A549 (cell line): ENCODE measurements at regions of chr5 and their contacts with region 1.

Region 1: DNA sequence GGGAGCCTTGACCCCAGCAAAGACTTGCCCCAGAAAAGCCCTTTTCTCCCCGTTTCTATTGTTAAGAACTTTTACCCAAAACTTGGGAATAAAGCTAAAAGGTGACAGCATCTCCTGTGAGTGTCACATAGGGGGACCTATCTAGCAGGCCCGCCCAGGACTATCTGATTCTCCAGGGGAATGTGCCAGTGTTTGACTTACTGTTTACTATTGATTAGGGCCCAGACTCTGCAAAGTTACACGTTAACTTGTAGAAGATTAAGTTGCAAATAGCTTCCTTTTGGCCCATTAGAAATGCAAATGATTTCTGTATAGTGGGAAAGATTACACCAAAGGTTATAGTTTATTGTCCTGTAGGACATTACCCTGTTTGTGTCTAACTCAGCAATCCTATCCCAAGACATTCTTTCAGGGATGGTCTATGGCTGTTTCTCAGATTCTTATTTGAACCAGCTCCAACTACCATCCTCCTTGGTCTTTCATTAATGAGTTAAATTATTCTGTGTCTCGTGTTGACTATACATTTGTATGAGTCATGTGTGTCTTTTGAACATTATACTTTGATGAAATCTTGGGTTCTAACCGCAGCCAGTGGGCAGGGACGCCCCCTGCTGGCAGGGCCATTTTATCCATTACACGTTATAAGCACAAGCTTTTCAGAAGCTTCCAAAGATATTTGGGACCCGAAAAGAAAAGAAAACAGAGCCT is 60.7 kb downstream of the HRH2 start:
- DNase-seq: peak in 1 of 2 experiments; percentile 42
- ATAC-seq: peak in 1 of 2 experiments; percentile 55; a peak in 1 of 6 replicates
- H3K4me3 ChIP-seq: no peak overlapping the region
- H3K27ac ChIP-seq: no peak overlapping the region
- H3K4me1 ChIP-seq: no peaks in the 10 kb centered on the region
- CTCF ChIP-seq: peak; percentile 67
- EP300 ChIP-seq: no peak
- POLR2A ChIP-seq: no peak
- RAD21 ChIP-seq: peak; percentile 59 to 66; a peak in 4 of 5 replicates

Region 2: DNA sequence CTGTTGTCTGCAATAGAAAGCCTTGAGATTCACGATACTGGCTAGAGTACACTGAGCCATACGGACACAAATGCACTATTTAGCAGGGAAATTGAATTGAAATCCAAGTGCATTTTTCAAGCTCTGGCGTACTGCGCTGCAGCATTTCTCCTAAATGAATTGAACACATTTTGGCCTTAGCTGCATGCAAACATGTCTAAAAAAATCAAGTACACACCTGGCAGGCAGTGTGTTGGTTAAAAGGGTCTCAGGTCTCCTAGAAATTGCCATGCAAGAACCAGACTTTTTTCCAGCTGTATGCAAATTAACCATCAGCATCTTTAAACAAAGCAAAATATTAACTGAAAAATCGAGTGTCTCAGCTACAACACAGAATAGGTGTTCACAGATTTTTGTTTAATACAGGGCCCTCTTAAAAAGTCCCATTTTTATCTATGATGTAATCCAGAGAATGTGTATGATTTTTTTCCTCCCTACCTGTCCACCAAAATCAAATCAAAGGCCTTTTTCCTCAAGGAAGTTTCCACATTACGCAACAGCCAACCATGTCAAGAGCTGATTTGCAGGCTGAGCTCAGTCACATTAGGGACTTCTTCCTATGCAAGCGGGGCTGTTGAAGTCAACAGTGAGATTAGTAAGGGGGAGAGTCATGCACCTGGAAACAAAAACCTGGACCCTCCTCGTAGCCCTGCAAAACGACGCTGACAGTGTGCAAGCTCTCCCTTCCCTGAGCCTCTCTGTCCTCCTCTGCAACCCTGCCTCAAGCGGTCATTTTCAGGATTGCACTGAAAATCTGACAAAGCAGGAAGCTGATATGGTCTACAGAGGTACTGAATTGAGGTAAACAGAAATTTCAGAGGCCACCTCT is 254.2 kb before region 1 on chr5:
- CTCF ChIA-PET with region 1: no interaction called
- POLR2A ChIA-PET with region 1: no interaction called
- DNase-seq: peak; percentile 67
- ATAC-seq: peak; percentile 97 to 98
- H3K4me3 ChIP-seq: no peak overlapping the region
- H3K27ac ChIP-seq: peak overlapping the region in 1 of 2 experiments; percentile 56; a peak in 2 of 6 replicates
- H3K4me1 ChIP-seq: peaks cover 9% of the 10 kb centered on the region; the same call in 2 of the 3 replicates
- CTCF ChIP-seq: peak; percentile 53
- EP300 ChIP-seq: no peak
- POLR2A ChIP-seq: no peak
- RAD21 ChIP-seq: peak; percentile 30 to 55; a peak in 3 of 5 replicates

Region 3: DNA sequence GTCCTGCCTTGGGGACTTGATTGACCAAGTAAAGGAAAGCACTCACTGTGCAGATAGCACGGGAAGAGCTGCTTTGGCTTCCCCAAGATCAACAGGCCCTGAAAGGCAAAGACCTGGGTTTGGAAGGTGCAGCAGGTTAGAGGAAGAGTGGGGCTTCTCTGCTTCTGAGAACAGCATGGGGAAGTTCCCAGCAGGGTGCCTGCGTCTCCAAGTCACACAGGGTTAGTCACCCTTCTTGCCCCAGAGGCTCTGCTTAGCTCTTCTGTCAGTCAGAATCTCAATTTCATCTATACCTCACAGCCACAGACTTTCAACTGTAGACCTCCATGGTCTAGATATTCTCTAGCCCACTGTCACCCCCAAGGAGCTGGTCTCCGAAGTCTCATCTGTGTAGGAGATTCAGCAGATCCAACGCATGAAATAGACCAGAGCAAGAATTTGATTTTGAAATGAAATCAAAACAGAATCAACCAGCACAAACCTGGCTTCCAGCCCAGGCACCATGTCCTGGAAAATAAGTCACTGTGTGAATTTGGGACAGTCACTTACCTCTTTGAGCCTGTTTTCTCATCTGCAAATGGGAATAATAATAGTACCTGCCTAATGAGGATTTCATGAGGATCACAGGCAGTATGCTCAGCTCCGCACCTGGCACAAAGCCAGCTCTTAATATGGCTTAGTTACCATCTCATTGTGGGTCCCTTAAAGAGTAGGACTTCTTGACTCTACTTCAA is 176.2 kb before region 1 on chr5:
- CTCF ChIA-PET with region 1: interaction called, 10 read pairs
- POLR2A ChIA-PET with region 1: no interaction called
- DNase-seq: no peak
- ATAC-seq: no peak
- H3K4me3 ChIP-seq: no peak overlapping the region
- H3K27ac ChIP-seq: no peak overlapping the region
- H3K4me1 ChIP-seq: no peaks in the 10 kb centered on the region
- CTCF ChIP-seq: no peak
- EP300 ChIP-seq: no peak
- POLR2A ChIP-seq: no peak
- RAD21 ChIP-seq: no peak